Spleen (tissue), 13 donors: ENCODE measurements at regions of chr20 and their contacts with region 1.

Region 1: GRCh38 chr20:41339507-41340326 is 904 bp upstream of the LPIN3 start:
- DNase-seq: peak; percentile 95
- H3K4me3 ChIP-seq: peak overlapping the region; percentile 8 to 63 (median 26)
- H3K27ac ChIP-seq: peak overlapping the region in 5 of 8 donors; percentile 23 to 65 (median 59)
- H3K4me1 ChIP-seq: peaks cover 14 to 23% (median 19%) of the 10 kb centered on the region in 6 donors
- H3K27me3 ChIP-seq: peaks cover 0 to 9% (median 0%) of the 10 kb centered on the region in 7 donors
- CTCF ChIP-seq: peak; percentile 93 to 99 (median 98)
- POLR2A ChIP-seq: no peak

Region 2: DNA sequence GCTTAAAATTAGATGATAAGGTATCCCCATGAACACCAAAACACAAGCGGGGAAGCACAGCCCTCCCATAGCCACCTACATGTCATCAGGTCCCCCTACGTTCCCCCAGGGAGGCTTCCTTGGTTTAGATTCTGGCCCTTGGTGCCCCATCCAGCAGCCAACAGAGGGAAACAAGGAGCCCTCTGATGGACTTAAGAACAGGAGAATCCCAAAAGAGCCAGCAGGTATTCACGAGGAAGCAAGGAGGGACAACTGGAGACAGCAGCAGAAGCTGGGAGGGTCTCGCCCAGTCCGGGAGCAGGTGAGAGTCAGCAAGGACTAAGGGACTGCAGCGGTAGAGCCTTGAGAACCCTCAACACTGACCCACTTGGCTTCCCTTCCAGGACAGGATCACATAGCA is 369.5 kb before region 1 on chr20:
- intact Hi-C with region 1: loop called (anchors 10 kb)
- DNase-seq: no peak
- H3K4me3 ChIP-seq: no peak overlapping the region
- H3K27ac ChIP-seq: no peak overlapping the region
- H3K4me1 ChIP-seq: peaks cover 0 to 12% (median 10%) of the 10 kb centered on the region in 6 donors
- H3K27me3 ChIP-seq: peaks cover 0 to 10% (median 0%) of the 10 kb centered on the region in 7 donors
- CTCF ChIP-seq: no peak
- POLR2A ChIP-seq: no peak

Region 3: GRCh38 chr20:41173161-41173721 is 166.5 kb before region 1 on chr20:
- intact Hi-C with region 1: loop called (anchors 2 kb)
- DNase-seq: peak; percentile 90
- H3K4me3 ChIP-seq: no peak overlapping the region
- H3K27ac ChIP-seq: peak overlapping the region in 3 of 8 donors; percentile 38 to 59 (median 56)
- H3K4me1 ChIP-seq: peaks cover 6 to 23% (median 14%) of the 10 kb centered on the region in 6 donors
- H3K27me3 ChIP-seq: no peaks in the 10 kb centered on the region
- CTCF ChIP-seq: peak; percentile 83 to 95 (median 91)
- POLR2A ChIP-seq: no peak

Region 4: DNA sequence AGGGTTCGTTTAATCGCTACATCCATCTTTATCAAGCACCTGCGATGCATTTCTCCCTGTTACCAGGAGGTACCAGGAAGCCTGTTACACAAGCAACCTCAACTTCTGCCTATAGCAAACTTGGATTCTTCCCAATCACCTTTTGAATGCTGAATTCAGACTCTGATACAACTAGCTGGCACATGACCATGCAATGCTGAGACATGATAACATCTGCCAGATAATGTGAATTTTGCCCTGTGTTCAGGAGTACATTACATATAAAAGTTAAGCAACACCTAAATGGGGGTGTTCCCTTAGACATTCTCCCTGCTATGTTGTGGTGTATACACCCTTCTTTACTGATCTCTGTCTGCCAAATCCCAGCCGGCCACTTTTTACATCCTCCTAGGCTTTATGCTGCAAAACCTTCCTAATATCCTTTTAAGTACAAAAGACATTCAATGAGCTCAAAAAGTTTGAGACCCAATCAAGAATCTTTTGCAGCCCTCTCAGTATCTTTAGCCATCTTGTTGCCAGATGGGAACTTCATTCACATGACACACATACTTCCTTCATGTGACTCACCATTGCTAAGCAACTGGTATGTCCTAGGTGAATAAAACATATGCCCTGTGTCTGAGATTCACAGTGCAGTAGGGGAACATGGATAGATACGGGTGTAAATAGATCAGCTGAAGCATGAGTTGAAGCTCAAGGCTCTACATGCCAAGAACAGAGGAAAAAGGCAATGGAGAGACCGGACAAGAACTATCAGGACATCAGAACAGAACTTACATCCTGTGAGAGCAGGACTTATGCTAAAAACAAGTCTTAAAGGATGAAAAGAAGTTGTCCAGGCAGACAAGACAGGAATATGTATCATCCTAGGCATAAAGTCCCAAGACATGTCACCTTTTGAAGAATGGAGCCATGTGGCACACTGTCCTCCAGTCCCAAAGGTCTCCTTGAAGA is 106.5 kb before region 1 on chr20:
- intact Hi-C with region 1: loop called (anchors 10 kb)
- DNase-seq: no peak
- H3K4me3 ChIP-seq: peak overlapping the region in 1 of 8 donors; percentile 22
- H3K27ac ChIP-seq: peak overlapping the region in 1 of 8 donors; percentile 32
- H3K4me1 ChIP-seq: peaks cover 0 to 40% (median 15%) of the 10 kb centered on the region in 6 donors
- H3K27me3 ChIP-seq: no peaks in the 10 kb centered on the region
- CTCF ChIP-seq: no peak
- POLR2A ChIP-seq: no peak